B cell (primary cell): ENCODE measurements at regions of chr3 and their contacts with region 1.

Region 1: GRCh38 chr3:123723522-123724168 is 138.8 kb upstream of the HACD2 start:
- DNase-seq: peak; percentile 69
- ATAC-seq: peak; percentile 53
- H3K4me3 ChIP-seq: no peak overlapping the region
- H3K4me3 Mint-ChIP-seq: no peak overlapping the region
- H3K27ac ChIP-seq: no peak overlapping the region
- H3K27ac Mint-ChIP-seq: no peak overlapping the region
- H3K4me1 ChIP-seq: peaks cover 0 to 4% of the 10 kb centered on the region in 2 donors
- H3K4me1 Mint-ChIP-seq: no peaks in the 10 kb centered on the region
- H3K27me3 ChIP-seq: peaks cover 0 to 5% (median 0%) of the 10 kb centered on the region in 4 experiments
- H3K27me3 Mint-ChIP-seq: peaks cover 19% of the 10 kb centered on the region
- CTCF ChIP-seq: peak; percentile 82

Region 2: GRCh38 chr3:123152687-123153086 is 571.0 kb before region 1 on chr3:
- CTCF ChIA-PET with region 1: no interaction called
- POLR2A ChIA-PET with region 1: no interaction called
- intact Hi-C with region 1: no loop called
- DNase-seq: no peak
- ATAC-seq: no peak
- H3K4me3 ChIP-seq: no peak overlapping the region
- H3K4me3 Mint-ChIP-seq: no peak overlapping the region
- H3K27ac ChIP-seq: peak overlapping the region in 1 of 2 donors; percentile 60
- H3K27ac Mint-ChIP-seq: peak overlapping the region; percentile 68
- H3K4me1 ChIP-seq: peaks cover 9 to 20% of the 10 kb centered on the region in 2 donors
- H3K4me1 Mint-ChIP-seq: peaks cover 18% of the 10 kb centered on the region
- H3K27me3 ChIP-seq: no peaks in the 10 kb centered on the region
- H3K27me3 Mint-ChIP-seq: no peaks in the 10 kb centered on the region
- CTCF ChIP-seq: no peak

Region 3: GRCh38 chr3:123286308-123287023 is 437.2 kb before region 1 on chr3:
- CTCF ChIA-PET with region 1: no interaction called
- POLR2A ChIA-PET with region 1: no interaction called
- intact Hi-C with region 1: no loop called
- DNase-seq: peak; percentile 19
- ATAC-seq: peak; percentile 43
- H3K4me3 ChIP-seq: no peak overlapping the region
- H3K4me3 Mint-ChIP-seq: no peak overlapping the region
- H3K27ac ChIP-seq: no peak overlapping the region
- H3K27ac Mint-ChIP-seq: no peak overlapping the region
- H3K4me1 ChIP-seq: no peaks in the 10 kb centered on the region
- H3K4me1 Mint-ChIP-seq: no peaks in the 10 kb centered on the region
- H3K27me3 ChIP-seq: no peaks in the 10 kb centered on the region
- H3K27me3 Mint-ChIP-seq: peaks cover 4% of the 10 kb centered on the region
- CTCF ChIP-seq: peak; percentile 46

Region 4: GRCh38 chr3:123328851-123329635 is 394.6 kb before region 1 on chr3:
- CTCF ChIA-PET with region 1: interaction called, 6 read pairs
- POLR2A ChIA-PET with region 1: no interaction called
- intact Hi-C with region 1: loop called (anchors 2 kb)
- DNase-seq: peak; percentile 73
- ATAC-seq: peak; percentile 73
- H3K4me3 ChIP-seq: no peak overlapping the region
- H3K4me3 Mint-ChIP-seq: no peak overlapping the region
- H3K27ac ChIP-seq: no peak overlapping the region
- H3K27ac Mint-ChIP-seq: no peak overlapping the region
- H3K4me1 ChIP-seq: no peaks in the 10 kb centered on the region
- H3K4me1 Mint-ChIP-seq: no peaks in the 10 kb centered on the region
- H3K27me3 ChIP-seq: peaks cover 0 to 2% (median 0%) of the 10 kb centered on the region in 4 experiments
- H3K27me3 Mint-ChIP-seq: peaks cover 12% of the 10 kb centered on the region
- CTCF ChIP-seq: peak; percentile 89

Region 5: GRCh38 chr3:123552095-123552714 is 171.4 kb before region 1 on chr3:
- CTCF ChIA-PET with region 1: no interaction called
- POLR2A ChIA-PET with region 1: no interaction called
- intact Hi-C with region 1: no loop called
- DNase-seq: no peak
- ATAC-seq: no peak
- H3K4me3 ChIP-seq: no peak overlapping the region
- H3K4me3 Mint-ChIP-seq: no peak overlapping the region
- H3K27ac ChIP-seq: no peak overlapping the region
- H3K27ac Mint-ChIP-seq: no peak overlapping the region
- H3K4me1 ChIP-seq: no peaks in the 10 kb centered on the region
- H3K4me1 Mint-ChIP-seq: peaks cover 3% of the 10 kb centered on the region
- H3K27me3 ChIP-seq: no peaks in the 10 kb centered on the region
- H3K27me3 Mint-ChIP-seq: no peaks in the 10 kb centered on the region
- CTCF ChIP-seq: peak; percentile 16

Region 6: GRCh38 chr3:123652346-123652984 is 71.2 kb before region 1 on chr3:
- CTCF ChIA-PET with region 1: interaction called, 23 read pairs
- POLR2A ChIA-PET with region 1: no interaction called
- intact Hi-C with region 1: loop called (anchors 1 kb)
- DNase-seq: peak; percentile 46
- ATAC-seq: peak; percentile 45
- H3K4me3 ChIP-seq: no peak overlapping the region
- H3K4me3 Mint-ChIP-seq: no peak overlapping the region
- H3K27ac ChIP-seq: no peak overlapping the region
- H3K27ac Mint-ChIP-seq: no peak overlapping the region
- H3K4me1 ChIP-seq: no peaks in the 10 kb centered on the region
- H3K4me1 Mint-ChIP-seq: no peaks in the 10 kb centered on the region
- H3K27me3 ChIP-seq: no peaks in the 10 kb centered on the region
- H3K27me3 Mint-ChIP-seq: peaks cover 3% of the 10 kb centered on the region
- CTCF ChIP-seq: peak; percentile 68

Region 7: DNA sequence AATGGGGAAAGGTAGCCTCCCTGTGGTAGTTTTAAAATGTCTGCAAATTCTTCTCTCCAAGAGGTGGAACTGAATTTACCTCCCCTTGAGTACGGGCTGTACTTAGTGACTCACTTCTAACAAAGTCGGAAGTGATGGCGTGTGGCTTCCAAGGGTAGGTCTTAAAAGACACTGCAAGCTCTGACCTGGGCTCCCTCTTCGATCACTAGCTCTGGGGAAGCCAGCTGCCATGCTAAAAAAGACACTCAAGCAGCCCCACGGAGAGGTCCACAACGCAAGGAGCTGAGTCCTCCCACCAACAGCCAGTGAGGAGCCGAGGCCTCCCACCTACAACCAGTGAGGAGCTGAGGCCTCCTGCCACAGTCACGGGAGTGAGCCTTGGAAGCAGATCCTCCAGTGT is 16.8 kb before region 1 on chr3:
- CTCF ChIA-PET with region 1: interaction called, 10 read pairs
- POLR2A ChIA-PET with region 1: no interaction called
- intact Hi-C with region 1: no loop called
- DNase-seq: no peak
- ATAC-seq: no peak
- H3K4me3 ChIP-seq: no peak overlapping the region
- H3K4me3 Mint-ChIP-seq: no peak overlapping the region
- H3K27ac ChIP-seq: no peak overlapping the region
- H3K27ac Mint-ChIP-seq: no peak overlapping the region
- H3K4me1 ChIP-seq: no peaks in the 10 kb centered on the region
- H3K4me1 Mint-ChIP-seq: no peaks in the 10 kb centered on the region
- H3K27me3 ChIP-seq: no peaks in the 10 kb centered on the region
- H3K27me3 Mint-ChIP-seq: peaks cover 4% of the 10 kb centered on the region
- CTCF ChIP-seq: no peak

Region 8: GRCh38 chr3:123713211-123713610 is 10.4 kb before region 1 on chr3:
- CTCF ChIA-PET with region 1: interaction called, 17 read pairs
- POLR2A ChIA-PET with region 1: no interaction called
- intact Hi-C with region 1: no loop called
- DNase-seq: no peak
- ATAC-seq: no peak
- H3K4me3 ChIP-seq: no peak overlapping the region
- H3K4me3 Mint-ChIP-seq: no peak overlapping the region
- H3K27ac ChIP-seq: no peak overlapping the region
- H3K27ac Mint-ChIP-seq: no peak overlapping the region
- H3K4me1 ChIP-seq: no peaks in the 10 kb centered on the region
- H3K4me1 Mint-ChIP-seq: no peaks in the 10 kb centered on the region
- H3K27me3 ChIP-seq: no peaks in the 10 kb centered on the region
- H3K27me3 Mint-ChIP-seq: peaks cover 14% of the 10 kb centered on the region
- CTCF ChIP-seq: no peak